CD4-positive, alpha-beta memory T cell (primary cell): ENCODE measurements at regions of chr1 and their contacts with region 1.

Region 1: DNA sequence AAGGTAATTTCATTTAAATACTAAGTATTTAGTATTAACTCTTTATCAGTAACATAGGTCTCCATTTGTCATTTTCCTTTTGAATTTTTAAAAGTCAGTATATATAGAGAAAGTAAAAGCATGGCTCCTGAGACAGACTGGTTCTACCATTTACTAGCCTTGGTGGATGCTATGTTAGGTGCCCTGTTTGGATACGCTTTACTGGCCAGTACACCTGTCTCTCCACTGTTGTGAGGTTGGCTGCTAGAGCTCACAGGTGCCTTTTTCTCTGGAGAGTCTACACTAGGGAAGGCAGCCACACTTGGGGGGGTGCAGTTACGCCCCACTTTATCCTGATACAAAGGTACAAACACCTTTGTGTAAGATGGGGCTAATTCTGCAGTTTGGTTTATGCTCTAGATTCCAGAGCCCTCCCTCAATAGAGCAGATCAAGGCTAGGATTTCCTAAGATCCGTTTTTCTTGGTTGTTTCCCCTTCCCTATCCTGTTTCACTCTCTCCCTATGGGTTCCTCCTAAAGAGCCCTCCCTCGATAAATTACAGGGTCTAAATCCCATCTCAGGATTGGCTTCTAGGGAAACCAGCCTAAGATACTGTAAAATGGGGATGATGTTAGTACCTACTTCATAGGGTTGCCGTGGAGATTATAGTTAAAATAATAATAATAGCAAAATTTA is 5.6 kb upstream of the GPSM2 start:
- DNase-seq: no peak
- H3K4me3 ChIP-seq: no peak overlapping the region
- H3K4me3 Mint-ChIP-seq: no peak overlapping the region
- H3K27ac ChIP-seq: no peak overlapping the region
- H3K27ac Mint-ChIP-seq: no peak overlapping the region
- H3K4me1 ChIP-seq: peaks cover 2% of the 10 kb centered on the region
- H3K4me1 Mint-ChIP-seq: peaks cover 0 to 1% (median 0%) of the 10 kb centered on the region in 4 donors
- H3K27me3 ChIP-seq: no peaks in the 10 kb centered on the region
- H3K27me3 Mint-ChIP-seq: peaks cover 4 to 9% of the 10 kb centered on the region in 2 donors

Region 2: DNA sequence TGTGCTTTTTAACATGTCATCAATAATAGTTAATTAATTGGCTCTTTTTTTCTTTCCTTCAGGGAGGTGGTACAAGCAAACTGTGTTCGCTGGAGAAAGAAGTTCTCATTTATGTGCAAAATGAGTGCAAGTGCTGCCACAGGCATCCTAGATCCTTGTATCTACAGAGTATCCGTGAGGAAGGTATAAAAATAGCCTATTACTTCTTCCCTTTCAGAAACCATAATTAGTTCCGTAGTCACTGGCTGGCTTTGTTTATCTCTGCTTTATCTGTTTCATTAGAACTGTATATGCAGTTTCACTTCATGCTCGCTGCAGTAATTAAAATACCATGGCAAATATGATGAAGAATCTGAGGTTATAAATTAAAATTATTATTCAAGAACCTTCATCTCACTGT is 270.7 kb before region 1 on chr1:
- CTCF ChIA-PET with region 1: no interaction called
- POLR2A ChIA-PET with region 1: no interaction called
- intact Hi-C with region 1: no loop called
- DNase-seq: no peak
- H3K4me3 ChIP-seq: no peak overlapping the region
- H3K4me3 Mint-ChIP-seq: no peak overlapping the region
- H3K27ac ChIP-seq: no peak overlapping the region
- H3K27ac Mint-ChIP-seq: no peak overlapping the region
- H3K4me1 ChIP-seq: no peaks in the 10 kb centered on the region
- H3K4me1 Mint-ChIP-seq: peaks cover 0 to 5% (median 2%) of the 10 kb centered on the region in 4 donors
- H3K27me3 ChIP-seq: no peaks in the 10 kb centered on the region
- H3K27me3 Mint-ChIP-seq: no peaks in the 10 kb centered on the region

Region 3: GRCh38 chr1:108897865-108898720 is 26.9 kb after region 1 on chr1:
- CTCF ChIA-PET with region 1: interaction called, 10 read pairs
- POLR2A ChIA-PET with region 1: no interaction called
- intact Hi-C with region 1: no loop called
- DNase-seq: peak; percentile 43 to 63 (median 55)
- H3K4me3 ChIP-seq: no peak overlapping the region
- H3K4me3 Mint-ChIP-seq: no peak overlapping the region
- H3K27ac ChIP-seq: no peak overlapping the region
- H3K27ac Mint-ChIP-seq: peak overlapping the region in 1 of 7 donors; percentile 38
- H3K4me1 ChIP-seq: no peaks in the 10 kb centered on the region
- H3K4me1 Mint-ChIP-seq: peaks cover 0 to 1% (median 0%) of the 10 kb centered on the region in 4 donors
- H3K27me3 ChIP-seq: no peaks in the 10 kb centered on the region
- H3K27me3 Mint-ChIP-seq: no peaks in the 10 kb centered on the region